ENCODE measurements at regions of chr2 and their contacts with region 1.

Region 1: GRCh38 chr2:166057370-166058164 is 70.3 kb downstream of the SCN1A start:
- DNase-seq: no peak
- H3K4me3 ChIP-seq: no peak overlapping the region
- H3K27ac ChIP-seq: peak overlapping the region in 2 of 8 donors; percentile 9 to 18
- H3K4me1 ChIP-seq: peaks cover 0 to 20% (median 5%) of the 10 kb centered on the region in 6 donors
- H3K27me3 ChIP-seq: no peaks in the 10 kb centered on the region
- CTCF ChIP-seq: peak in 7 of 11 experiments; percentile 24 to 38 (median 32)
- POLR2A ChIP-seq: no peak

Region 2: DNA sequence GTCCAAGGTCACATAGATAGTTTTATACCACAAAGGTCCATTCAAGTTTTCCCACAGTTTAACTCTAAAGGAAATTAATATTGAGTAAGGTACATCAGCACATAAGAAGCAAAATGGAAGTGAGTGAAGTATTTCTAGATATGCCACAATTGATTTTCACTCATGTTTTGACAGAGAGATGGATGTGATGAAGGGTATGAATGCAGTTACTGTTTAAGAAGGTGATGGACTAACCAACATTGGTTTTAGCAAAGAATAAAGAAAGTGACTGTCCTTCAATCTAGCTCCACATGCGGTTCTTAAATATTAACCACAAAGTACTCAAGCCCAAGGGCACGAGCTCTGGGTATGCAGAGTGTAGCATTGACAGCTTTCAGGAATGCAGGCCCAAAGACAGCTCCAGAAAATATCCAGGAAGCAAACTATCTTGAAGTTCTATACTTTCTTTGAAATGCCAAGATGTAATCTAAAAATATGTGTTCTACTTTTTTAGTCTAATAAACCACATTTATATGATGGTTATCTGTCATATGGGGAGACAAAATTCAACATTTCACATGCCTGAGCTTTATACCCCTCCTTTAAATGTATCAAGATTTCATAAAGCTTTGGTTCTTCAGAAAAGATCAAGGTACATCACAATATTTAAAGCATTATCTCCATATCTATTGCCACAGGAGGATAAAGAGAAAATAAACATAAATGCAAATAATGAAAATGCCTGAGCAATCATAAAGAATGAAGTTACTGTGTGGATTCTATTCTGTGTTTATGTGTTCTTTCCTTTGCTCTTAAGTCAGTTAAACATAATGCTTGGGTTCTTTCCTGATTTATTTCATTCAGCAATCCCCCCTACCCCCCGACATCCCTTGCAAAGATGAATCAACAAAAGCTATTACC is 76.9 kb after region 1 on chr2:
- intact Hi-C with region 1: loop called (anchors 5 kb)
- DNase-seq: no peak
- H3K4me3 ChIP-seq: no peak overlapping the region
- H3K27ac ChIP-seq: no peak overlapping the region
- H3K4me1 ChIP-seq: no peaks in the 10 kb centered on the region
- H3K27me3 ChIP-seq: peaks cover 0 to 27% (median 0%) of the 10 kb centered on the region in 7 donors
- CTCF ChIP-seq: no peak
- POLR2A ChIP-seq: no peak

Region 3: GRCh38 chr2:166454006-166454595 is 396.5 kb after region 1 on chr2:
- intact Hi-C with region 1: no loop called
- DNase-seq: no peak
- H3K4me3 ChIP-seq: no peak overlapping the region
- H3K27ac ChIP-seq: no peak overlapping the region
- H3K4me1 ChIP-seq: no peaks in the 10 kb centered on the region
- H3K27me3 ChIP-seq: no peaks in the 10 kb centered on the region
- CTCF ChIP-seq: no peak
- POLR2A ChIP-seq: no peak

Measured in spleen (tissue), 13 donors.